H1 (cell line): ENCODE measurements at regions of chr15 and their contacts with region 1.

Region 1: GRCh38 chr15:45660231-45660979 is 25.6 kb downstream of the SQOR start:
- DNase-seq: no peak
- H3K4me3 ChIP-seq: no peak overlapping the region
- H3K27ac ChIP-seq: no peak overlapping the region
- H3K4me1 ChIP-seq: peaks cover 0 to 3% (median 0%) of the 10 kb centered on the region in 4 experiments; a peak in 2 of 7 replicates
- H3K27me3 ChIP-seq: no peaks in the 10 kb centered on the region; a peak in 1 of 7 replicates
- CTCF ChIP-seq: peak in 1 of 3 experiments; percentile 24; a peak in 2 of 4 replicates
- EP300 ChIP-seq: no peak
- POLR2A ChIP-seq: no peak
- RAD21 ChIP-seq: no peak

Region 2: DNA sequence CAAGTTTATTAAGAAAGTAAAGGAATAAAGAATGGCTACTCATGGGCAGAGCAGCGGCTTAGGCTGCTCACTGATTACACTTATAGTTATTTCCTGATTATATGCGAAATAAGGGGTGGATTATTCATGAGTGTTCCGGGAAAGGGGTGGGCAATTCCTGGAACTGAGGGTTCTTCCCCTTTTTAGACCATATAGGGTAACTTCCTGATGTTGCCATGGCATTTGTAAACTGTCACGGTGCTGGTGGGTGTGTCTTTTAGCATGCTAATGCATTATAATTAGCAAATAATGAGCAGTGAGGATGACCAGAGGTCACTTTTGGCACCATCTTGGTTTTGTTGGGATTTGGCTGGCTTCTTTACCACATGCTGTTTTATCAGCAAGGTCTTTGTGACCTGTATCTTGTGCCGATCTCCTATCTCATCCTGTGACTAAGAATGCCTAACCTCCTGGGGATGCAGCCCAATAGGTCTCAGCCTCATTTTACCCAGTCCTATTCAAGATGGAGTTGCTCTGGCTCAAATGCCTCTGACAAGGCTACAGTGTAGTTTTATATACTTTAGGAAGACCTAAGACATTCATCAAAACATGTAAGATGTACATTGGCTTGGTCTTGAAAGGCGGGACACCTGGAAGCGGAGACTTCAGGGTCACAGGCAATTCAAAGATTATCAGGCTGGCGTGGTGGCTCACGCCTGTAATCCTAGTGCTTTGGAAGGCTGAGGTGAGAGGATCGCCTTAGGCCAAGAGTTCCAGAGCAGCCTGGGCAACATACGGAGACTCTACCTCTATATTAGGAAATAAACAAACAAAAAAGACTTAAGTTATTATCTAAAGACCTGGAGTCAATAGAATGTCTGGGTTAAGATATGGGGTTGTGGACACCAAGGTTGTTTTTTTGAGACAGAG is 76.4 kb before region 1 on chr15:
- CTCF ChIA-PET with region 1: no interaction called
- POLR2A ChIA-PET with region 1: no interaction called
- DNase-seq: no peak
- H3K4me3 ChIP-seq: no peak overlapping the region
- H3K27ac ChIP-seq: no peak overlapping the region
- H3K4me1 ChIP-seq: peaks cover 3 to 12% (median 7%) of the 10 kb centered on the region in 4 experiments; a peak in 4 of 7 replicates
- H3K27me3 ChIP-seq: no peaks in the 10 kb centered on the region; a peak in 1 of 7 replicates
- CTCF ChIP-seq: no peak
- EP300 ChIP-seq: no peak
- POLR2A ChIP-seq: no peak
- RAD21 ChIP-seq: no peak

Region 3: GRCh38 chr15:45641999-45642932 is 18.1 kb before region 1 on chr15:
- CTCF ChIA-PET with region 1: interaction called, 14 read pairs
- POLR2A ChIA-PET with region 1: no interaction called
- DNase-seq: no peak
- H3K4me3 ChIP-seq: no peak overlapping the region
- H3K27ac ChIP-seq: no peak overlapping the region
- H3K4me1 ChIP-seq: no peaks in the 10 kb centered on the region
- H3K27me3 ChIP-seq: no peaks in the 10 kb centered on the region; a peak in 1 of 7 replicates
- CTCF ChIP-seq: no peak
- EP300 ChIP-seq: no peak
- POLR2A ChIP-seq: no peak
- RAD21 ChIP-seq: no peak

Region 4: DNA sequence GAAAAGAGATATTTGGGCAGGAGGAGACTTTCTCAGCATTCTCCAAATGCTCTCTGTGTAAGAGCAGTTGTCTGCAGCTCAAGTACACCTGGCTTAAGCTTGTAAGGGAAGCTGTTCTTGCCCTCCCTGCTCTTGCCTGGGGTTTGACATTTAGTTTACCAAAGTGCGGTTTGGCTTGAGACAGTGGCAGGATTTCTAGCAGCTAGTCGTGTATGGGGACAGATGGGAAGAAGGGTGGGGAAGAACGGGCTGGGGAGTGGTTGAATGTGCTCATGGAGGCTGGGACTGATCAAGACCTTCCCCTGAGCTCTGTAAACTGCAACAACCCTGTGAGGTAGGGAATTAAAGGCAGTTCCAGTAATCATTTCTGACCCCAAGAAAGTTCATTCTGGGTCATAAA is 14.3 kb after region 1 on chr15:
- CTCF ChIA-PET with region 1: interaction called, 103 read pairs
- POLR2A ChIA-PET with region 1: no interaction called
- DNase-seq: no peak
- H3K4me3 ChIP-seq: no peak overlapping the region
- H3K27ac ChIP-seq: no peak overlapping the region
- H3K4me1 ChIP-seq: no peaks in the 10 kb centered on the region
- H3K27me3 ChIP-seq: no peaks in the 10 kb centered on the region; a peak in 1 of 7 replicates
- CTCF ChIP-seq: no peak
- EP300 ChIP-seq: no peak
- POLR2A ChIP-seq: no peak
- RAD21 ChIP-seq: no peak

Region 5: DNA sequence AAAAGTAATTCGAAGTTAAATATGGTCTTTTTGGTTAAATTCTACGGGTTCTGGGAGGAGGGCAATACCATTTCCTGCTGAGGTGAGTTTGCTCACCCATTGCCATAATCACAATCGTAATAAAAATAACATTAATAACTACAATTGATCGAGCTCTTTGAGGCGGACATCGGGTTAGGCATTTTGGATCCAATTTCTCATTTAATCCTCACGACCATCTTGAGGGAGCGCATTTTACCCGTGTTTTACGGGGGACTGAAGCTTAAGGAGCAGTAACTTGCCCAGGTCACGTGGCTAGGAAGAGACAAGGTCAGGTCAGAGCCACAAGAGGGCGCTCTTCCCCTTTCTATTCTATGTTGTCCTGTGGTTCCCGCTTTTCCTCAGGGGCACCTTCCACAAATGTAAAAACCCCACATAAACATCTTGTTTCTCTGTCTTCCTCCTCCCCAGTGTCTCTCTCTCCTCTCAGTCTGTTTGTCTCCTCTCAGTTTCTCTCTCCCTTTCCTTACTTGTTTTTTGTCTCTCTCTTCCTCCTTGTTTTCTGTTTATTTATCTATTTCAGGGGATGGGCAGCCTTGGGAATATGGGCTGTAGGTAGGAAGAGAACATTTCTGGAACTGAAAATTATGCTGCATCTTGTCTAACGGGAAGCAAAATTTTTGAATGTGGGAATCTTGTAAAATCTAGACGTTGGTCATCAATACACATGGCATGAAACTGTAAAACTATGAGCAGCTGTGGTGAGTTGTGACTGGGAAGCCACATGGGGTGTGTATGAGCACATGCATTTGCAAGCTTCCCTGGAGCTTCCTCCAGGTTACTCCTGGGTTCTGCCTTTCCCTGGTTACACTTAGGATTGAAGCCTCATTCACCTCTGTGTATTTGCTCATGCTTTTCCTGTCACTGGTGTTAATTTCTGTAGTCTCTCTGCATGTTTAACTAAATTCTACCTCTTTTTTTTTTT is 45.4 kb after region 1 on chr15:
- CTCF ChIA-PET with region 1: interaction called, 26 read pairs
- POLR2A ChIA-PET with region 1: interaction called, 3 read pairs
- DNase-seq: peak; percentile 68 to 83
- H3K4me3 ChIP-seq: peak overlapping the region; percentile 38 to 72 (median 62)
- H3K27ac ChIP-seq: no peak overlapping the region
- H3K4me1 ChIP-seq: no peaks in the 10 kb centered on the region
- H3K27me3 ChIP-seq: peaks cover 0 to 3% (median 0%) of the 10 kb centered on the region in 4 experiments; a peak in 3 of 7 replicates
- CTCF ChIP-seq: peak; percentile 67 to 90 (median 74)
- EP300 ChIP-seq: 0 out of 3 replicates have a peak, but pooled peaks of 1 of the 2 experiments have one; percentile 4
- POLR2A ChIP-seq: no peak
- RAD21 ChIP-seq: peak; percentile 82 to 84

Region 6: GRCh38 chr15:45903283-45903682 is 242.9 kb after region 1 on chr15:
- CTCF ChIA-PET with region 1: no interaction called
- POLR2A ChIA-PET with region 1: no interaction called
- DNase-seq: no peak
- H3K4me3 ChIP-seq: no peak overlapping the region
- H3K27ac ChIP-seq: no peak overlapping the region
- H3K4me1 ChIP-seq: no peaks in the 10 kb centered on the region
- H3K27me3 ChIP-seq: peaks cover 0 to 1% (median 0%) of the 10 kb centered on the region in 4 experiments; a peak in 1 of 7 replicates
- CTCF ChIP-seq: no peak
- EP300 ChIP-seq: no peak
- POLR2A ChIP-seq: no peak
- RAD21 ChIP-seq: no peak